ENCODE measurements at regions of chr7 and their contacts with region 1.

Region 1: GRCh38 chr7:29189743-29190201 is 4.8 kb upstream of the CHN2 start:
- DNase-seq: peak; percentile 87
- H3K4me3 ChIP-seq: no peak overlapping the region; a peak in 2 of 4 replicates
- H3K27ac ChIP-seq: no peak overlapping the region
- H3K4me1 ChIP-seq: peaks cover 0 to 6% of the 10 kb centered on the region in 2 experiments; a peak in 1 of 4 replicates
- H3K27me3 ChIP-seq: peaks cover 19% of the 10 kb centered on the region
- CTCF ChIP-seq: peak; percentile 91
- EP300 ChIP-seq: no peak
- RAD21 ChIP-seq: peak; percentile 87

Region 2: GRCh38 chr7:28840592-28840995 is 349.2 kb before region 1 on chr7:
- CTCF ChIA-PET with region 1: no interaction called
- POLR2A ChIA-PET with region 1: no interaction called
- DNase-seq: peak; percentile 50
- H3K4me3 ChIP-seq: no peak overlapping the region
- H3K27ac ChIP-seq: no peak overlapping the region
- H3K4me1 ChIP-seq: peaks cover 0 to 14% of the 10 kb centered on the region in 2 experiments; a peak in 2 of 4 replicates
- H3K27me3 ChIP-seq: peaks cover 23% of the 10 kb centered on the region
- CTCF ChIP-seq: peak; percentile 59
- EP300 ChIP-seq: no peak
- RAD21 ChIP-seq: peak; percentile 25; the same call in 1 of the 2 replicates

Region 3: GRCh38 chr7:28926871-28927597 is 262.7 kb before region 1 on chr7:
- CTCF ChIA-PET with region 1: interaction called, 113 read pairs
- POLR2A ChIA-PET with region 1: no interaction called
- DNase-seq: peak; percentile 72
- H3K4me3 ChIP-seq: peak overlapping the region; percentile 55 to 65
- H3K27ac ChIP-seq: peak overlapping the region in 1 of 2 experiments; percentile 45; a peak in 1 of 4 replicates
- H3K4me1 ChIP-seq: peaks cover 0 to 22% of the 10 kb centered on the region in 2 experiments; a peak in 3 of 4 replicates
- H3K27me3 ChIP-seq: 0 out of 2 replicates have a peak, but pooled peaks cover 15% of the 10 kb centered on the region
- CTCF ChIP-seq: peak; percentile 99
- EP300 ChIP-seq: peak in 1 of 2 experiments; percentile 42; a peak in 1 of 4 replicates
- RAD21 ChIP-seq: peak; percentile 99

Region 4: DNA sequence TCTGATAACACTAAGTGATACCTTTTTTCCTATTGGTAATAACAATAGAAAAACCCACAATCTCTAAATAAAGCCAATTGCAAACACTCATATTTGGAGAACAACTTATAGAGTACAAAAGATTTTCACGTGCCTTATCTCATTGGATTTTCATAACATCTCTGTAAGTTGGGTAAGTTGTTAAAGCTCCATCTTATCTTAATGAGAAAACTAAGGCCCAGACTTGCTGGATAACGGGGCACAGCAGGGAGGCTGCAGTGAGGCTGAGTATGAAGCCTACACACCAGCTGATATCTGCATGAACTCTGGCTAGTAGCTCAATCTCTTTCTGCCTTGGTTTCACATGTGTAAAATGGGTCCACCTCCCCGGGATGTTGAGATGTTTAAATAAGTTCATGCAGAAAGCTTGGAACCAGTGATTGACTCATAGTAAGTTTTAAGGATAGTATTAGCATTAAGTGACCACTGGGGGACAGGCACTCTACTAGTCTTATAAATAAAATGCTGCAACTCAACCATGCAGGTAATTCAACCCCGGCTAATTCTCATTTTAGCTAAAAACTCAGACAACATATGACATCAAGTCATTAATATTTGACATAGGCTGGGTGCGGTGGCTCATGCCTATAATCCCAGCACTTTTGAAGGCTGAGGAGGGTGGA is 70.1 kb before region 1 on chr7:
- CTCF ChIA-PET with region 1: interaction called, 38 read pairs
- POLR2A ChIA-PET with region 1: no interaction called
- DNase-seq: no peak
- H3K4me3 ChIP-seq: no peak overlapping the region
- H3K27ac ChIP-seq: no peak overlapping the region
- H3K4me1 ChIP-seq: no peaks in the 10 kb centered on the region
- H3K27me3 ChIP-seq: 0 out of 2 replicates have a peak, but pooled peaks cover 5% of the 10 kb centered on the region
- CTCF ChIP-seq: no peak
- EP300 ChIP-seq: no peak
- RAD21 ChIP-seq: no peak

Region 5: GRCh38 chr7:29217113-29217512 is 27.3 kb after region 1 on chr7:
- CTCF ChIA-PET with region 1: interaction called, 23 read pairs
- POLR2A ChIA-PET with region 1: no interaction called
- DNase-seq: no peak
- H3K4me3 ChIP-seq: no peak overlapping the region
- H3K27ac ChIP-seq: no peak overlapping the region
- H3K4me1 ChIP-seq: no peaks in the 10 kb centered on the region
- H3K27me3 ChIP-seq: no peaks in the 10 kb centered on the region
- CTCF ChIP-seq: no peak
- EP300 ChIP-seq: no peak
- RAD21 ChIP-seq: no peak

Region 6: DNA sequence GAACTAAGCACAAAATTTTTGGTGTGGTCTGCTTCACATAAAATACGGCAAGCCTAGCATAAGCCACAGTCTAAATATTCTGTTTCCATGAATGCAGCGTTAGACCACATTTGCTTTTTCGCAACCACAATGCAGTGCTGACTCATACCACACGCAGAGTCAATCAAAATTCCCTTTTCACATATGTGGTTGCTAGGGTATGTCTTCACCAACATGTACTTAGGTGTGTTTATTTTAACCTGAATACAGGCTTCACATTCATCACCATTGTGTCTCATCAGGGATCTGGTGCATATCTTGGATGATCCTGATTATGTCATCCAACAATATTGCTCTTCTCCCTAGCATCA is 95.6 kb after region 1 on chr7:
- CTCF ChIA-PET with region 1: interaction called, 18 read pairs
- POLR2A ChIA-PET with region 1: no interaction called
- DNase-seq: no peak
- H3K4me3 ChIP-seq: no peak overlapping the region
- H3K27ac ChIP-seq: peak overlapping the region in 1 of 2 experiments; percentile 22; a peak in 1 of 4 replicates
- H3K4me1 ChIP-seq: peaks cover 13 to 29% of the 10 kb centered on the region in 2 experiments; a peak in 3 of 4 replicates
- H3K27me3 ChIP-seq: no peaks in the 10 kb centered on the region
- CTCF ChIP-seq: no peak
- EP300 ChIP-seq: peak in 1 of 2 experiments; percentile 38; a peak in 1 of 4 replicates
- RAD21 ChIP-seq: no peak

Region 7: GRCh38 chr7:29332042-29332811 is 142.5 kb after region 1 on chr7:
- CTCF ChIA-PET with region 1: interaction called, 62 read pairs
- POLR2A ChIA-PET with region 1: no interaction called
- DNase-seq: no peak
- H3K4me3 ChIP-seq: no peak overlapping the region
- H3K27ac ChIP-seq: no peak overlapping the region
- H3K4me1 ChIP-seq: peaks cover 9 to 10% of the 10 kb centered on the region in 2 experiments; a peak in 3 of 4 replicates
- H3K27me3 ChIP-seq: 0 out of 2 replicates have a peak, but pooled peaks cover 4% of the 10 kb centered on the region
- CTCF ChIP-seq: no peak
- EP300 ChIP-seq: no peak
- RAD21 ChIP-seq: no peak

Region 8: GRCh38 chr7:29386196-29386765 is 196.5 kb after region 1 on chr7:
- CTCF ChIA-PET with region 1: interaction called, 18 read pairs
- POLR2A ChIA-PET with region 1: no interaction called
- DNase-seq: no peak
- H3K4me3 ChIP-seq: no peak overlapping the region
- H3K27ac ChIP-seq: no peak overlapping the region
- H3K4me1 ChIP-seq: peaks cover 0 to 8% of the 10 kb centered on the region in 2 experiments; a peak in 1 of 4 replicates
- H3K27me3 ChIP-seq: peaks cover 11% of the 10 kb centered on the region; the same call in 1 of the 2 replicates
- CTCF ChIP-seq: no peak
- EP300 ChIP-seq: no peak
- RAD21 ChIP-seq: no peak

Region 9: GRCh38 chr7:29565982-29566746 is 376.4 kb after region 1 on chr7:
- CTCF ChIA-PET with region 1: no interaction called
- POLR2A ChIA-PET with region 1: no interaction called
- DNase-seq: peak; percentile 79
- H3K4me3 ChIP-seq: peak overlapping the region; percentile 36 to 62
- H3K27ac ChIP-seq: no peak overlapping the region
- H3K4me1 ChIP-seq: peaks cover 0 to 38% of the 10 kb centered on the region in 2 experiments; a peak in 1 of 4 replicates
- H3K27me3 ChIP-seq: peaks cover 38% of the 10 kb centered on the region
- CTCF ChIP-seq: no peak
- EP300 ChIP-seq: no peak
- RAD21 ChIP-seq: no peak